Panc1 (cell line): ENCODE measurements at regions of chrX and their contacts with region 1.

Region 1: DNA sequence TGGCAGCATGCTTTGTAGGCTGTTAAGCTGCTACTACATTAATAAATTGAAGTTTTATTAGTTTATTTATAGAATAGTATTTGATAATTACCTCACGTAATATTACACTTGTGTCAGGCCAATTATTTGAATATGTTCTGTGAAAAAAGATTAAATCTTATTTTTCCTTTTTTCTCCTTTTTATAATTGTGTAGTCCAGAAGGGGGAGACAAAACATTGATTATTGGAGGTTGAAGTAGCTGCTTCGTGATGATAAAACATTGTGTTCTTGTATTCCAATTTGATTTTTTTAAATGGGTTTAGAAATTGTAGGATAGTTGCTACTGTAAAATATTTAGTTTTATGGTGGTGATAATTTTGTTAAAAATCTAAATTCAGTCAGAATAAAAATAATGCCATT is 85.7 kb downstream of the DIAPH2 start:
- DNase-seq: no peak
- ATAC-seq: no peak
- H3K4me3 ChIP-seq: no peak overlapping the region
- H3K27ac ChIP-seq: no peak overlapping the region
- H3K4me1 ChIP-seq: no peaks in the 10 kb centered on the region
- H3K27me3 ChIP-seq: no peaks in the 10 kb centered on the region
- CTCF ChIP-seq: no peak; the same call in 1 of the 2 replicates

Region 2: GRCh38 chrX:95367286-95367685 is 1403.0 kb before region 1 on chrX:
- CTCF ChIA-PET with region 1: no interaction called
- POLR2A ChIA-PET with region 1: no interaction called
- in situ Hi-C with region 1: no loop called
- intact Hi-C with region 1: no loop called
- DNase-seq: no peak
- ATAC-seq: no peak
- H3K4me3 ChIP-seq: no peak overlapping the region
- H3K27ac ChIP-seq: no peak overlapping the region
- H3K4me1 ChIP-seq: no peaks in the 10 kb centered on the region
- H3K27me3 ChIP-seq: no peaks in the 10 kb centered on the region
- CTCF ChIP-seq: no peak

Region 3: DNA sequence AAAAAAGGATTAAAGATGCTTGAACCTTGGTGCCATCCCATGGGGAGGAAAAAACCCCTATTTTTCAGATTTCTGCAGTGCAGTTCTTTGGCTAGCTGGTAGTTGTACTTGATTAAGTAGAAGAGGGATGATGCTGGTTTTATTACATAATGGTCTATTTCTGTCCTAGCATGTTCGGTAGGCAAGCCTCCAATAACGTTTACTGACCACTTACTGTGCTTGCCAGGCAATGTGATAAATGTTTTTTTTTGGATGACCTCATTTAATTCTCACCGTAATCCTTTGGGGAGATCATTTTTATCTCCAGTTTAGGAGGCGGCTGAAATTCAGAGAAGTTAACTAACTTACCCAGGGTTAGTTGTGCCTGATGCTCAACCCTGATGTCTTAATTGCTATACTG is 21.2 kb after region 1 on chrX:
- CTCF ChIA-PET with region 1: no interaction called
- POLR2A ChIA-PET with region 1: interaction called, 13 read pairs
- in situ Hi-C with region 1: no loop called
- intact Hi-C with region 1: no loop called
- DNase-seq: no peak
- ATAC-seq: no peak
- H3K4me3 ChIP-seq: no peak overlapping the region
- H3K27ac ChIP-seq: no peak overlapping the region
- H3K4me1 ChIP-seq: no peaks in the 10 kb centered on the region
- H3K27me3 ChIP-seq: no peaks in the 10 kb centered on the region
- CTCF ChIP-seq: no peak

Region 4: DNA sequence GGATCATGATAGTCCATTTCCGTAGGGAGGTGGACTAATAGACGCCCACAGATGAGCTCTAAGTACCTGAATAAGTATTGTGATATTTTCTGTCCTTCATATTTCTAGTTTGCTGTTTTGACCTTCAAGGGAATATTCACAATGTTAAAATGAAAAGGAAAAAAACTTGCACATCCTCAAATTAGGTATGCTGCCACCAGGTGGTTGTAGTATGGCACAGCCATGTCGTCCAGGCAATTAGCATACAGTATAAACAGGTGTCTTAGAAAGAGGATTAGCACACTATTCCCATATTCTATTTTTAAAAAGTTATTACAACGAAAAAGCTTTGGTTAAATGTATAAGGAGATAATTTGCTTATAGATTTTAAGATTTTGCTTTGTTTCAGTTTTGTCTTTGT is 915.4 kb after region 1 on chrX:
- CTCF ChIA-PET with region 1: no interaction called
- POLR2A ChIA-PET with region 1: no interaction called
- in situ Hi-C with region 1: no loop called
- intact Hi-C with region 1: loop called (anchors 5 kb)
- DNase-seq: peak; percentile 12
- ATAC-seq: no peak
- H3K4me3 ChIP-seq: no peak overlapping the region
- H3K27ac ChIP-seq: no peak overlapping the region
- H3K4me1 ChIP-seq: no peaks in the 10 kb centered on the region
- H3K27me3 ChIP-seq: no peaks in the 10 kb centered on the region
- CTCF ChIP-seq: peak; percentile 66; the same call in 1 of the 2 replicates